Common myeloid progenitor, CD34-positive (primary cell): ENCODE measurements at regions of chr2 and their contacts with region 1.

Region 1: DNA sequence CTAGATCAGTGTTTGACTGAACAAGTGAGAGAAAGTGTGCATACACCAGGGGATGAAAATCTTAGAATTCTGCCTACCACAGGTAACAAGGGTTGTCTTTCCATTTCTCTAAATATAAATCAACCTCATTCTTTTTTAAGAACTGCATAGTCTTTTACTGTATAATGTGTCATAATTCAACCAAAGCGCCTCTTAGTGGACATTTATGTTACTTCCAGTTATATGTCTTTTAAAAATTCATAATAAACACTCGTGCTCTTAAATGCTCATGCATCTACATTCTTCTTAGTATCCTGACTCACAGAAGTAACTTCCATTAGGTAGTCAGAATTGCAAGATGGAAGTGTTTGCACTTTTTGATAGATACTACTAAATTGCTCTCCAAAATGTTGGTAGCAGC is 76.2 kb downstream of the CHRNA1 start:
- DNase-seq: peak; percentile 45 to 73 (median 72)
- H3K4me3 ChIP-seq: no peak overlapping the region
- H3K27ac ChIP-seq: no peak overlapping the region
- H3K4me1 ChIP-seq: peaks cover 0 to 7% (median 3%) of the 10 kb centered on the region in 4 experiments
- H3K27me3 ChIP-seq: peaks cover 0 to 4% (median 0%) of the 10 kb centered on the region in 5 experiments

Region 2: DNA sequence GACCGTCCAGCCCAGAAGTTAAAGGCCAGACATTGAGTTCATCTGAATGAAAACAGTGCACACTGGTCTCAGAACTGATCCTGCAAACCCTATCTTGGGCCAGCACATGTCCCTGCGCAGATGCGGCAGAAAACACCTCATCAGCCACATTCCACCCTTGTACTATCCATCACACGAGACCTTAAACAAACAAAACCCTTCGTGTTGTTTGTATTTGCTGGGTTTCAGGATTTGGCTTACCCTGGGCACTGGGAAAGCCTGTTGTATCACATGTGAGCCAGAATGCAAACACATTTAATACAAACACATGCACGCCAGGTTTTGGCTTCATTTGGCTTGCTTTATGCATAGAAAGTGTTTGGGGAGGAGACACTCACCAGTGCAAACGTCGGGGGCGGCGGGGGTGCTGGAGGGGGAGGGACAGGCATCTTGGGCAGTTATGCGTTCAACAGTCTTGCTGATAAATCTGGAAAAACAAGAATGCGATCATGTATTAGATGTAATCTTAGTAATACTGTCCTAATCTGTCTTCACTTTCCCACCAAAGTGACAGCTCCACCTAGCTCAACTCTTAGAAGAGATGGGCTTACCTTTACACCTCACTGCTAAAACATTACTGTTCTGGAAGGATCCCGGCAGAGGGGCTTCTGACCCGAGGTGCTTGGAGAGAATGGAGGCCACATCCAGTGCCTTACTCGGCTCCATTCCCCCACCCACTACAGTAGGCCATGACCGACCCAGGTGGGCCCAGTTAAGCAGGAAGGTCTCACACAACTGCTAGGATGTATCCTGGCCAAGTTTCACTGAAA is 102.7 kb before region 1 on chr2:
- CTCF ChIA-PET with region 1: interaction called, 450 read pairs
- POLR2A ChIA-PET with region 1: no interaction called
- DNase-seq: no peak
- H3K4me3 ChIP-seq: no peak overlapping the region
- H3K27ac ChIP-seq: peak overlapping the region in 1 of 2 experiments; percentile 38
- H3K4me1 ChIP-seq: peaks cover 5 to 66% (median 43%) of the 10 kb centered on the region in 4 experiments
- H3K27me3 ChIP-seq: no peaks in the 10 kb centered on the region

Region 3: GRCh38 chr2:174634130-174635014 is 53.7 kb before region 1 on chr2:
- CTCF ChIA-PET with region 1: interaction called, 18 read pairs
- POLR2A ChIA-PET with region 1: no interaction called
- DNase-seq: peak; percentile 51 to 78 (median 63)
- H3K4me3 ChIP-seq: peak overlapping the region in 6 of 7 experiments; percentile 58 to 94 (median 74)
- H3K27ac ChIP-seq: peak overlapping the region; percentile 67 to 86
- H3K4me1 ChIP-seq: peaks cover 27 to 55% (median 41%) of the 10 kb centered on the region in 4 experiments
- H3K27me3 ChIP-seq: no peaks in the 10 kb centered on the region